B cell (primary cell): ENCODE measurements at regions of chr7 and their contacts with region 1.

Region 1: GRCh38 chr7:128178611-128179010 is 62.5 kb upstream of the LEP start:
- DNase-seq: peak; percentile 70
- ATAC-seq: peak; percentile 100
- H3K4me3 ChIP-seq: no peak overlapping the region
- H3K4me3 Mint-ChIP-seq: peak overlapping the region; percentile 44
- H3K27ac ChIP-seq: no peak overlapping the region
- H3K27ac Mint-ChIP-seq: peak overlapping the region; percentile 72
- H3K4me1 ChIP-seq: peaks cover 29 to 35% of the 10 kb centered on the region in 2 donors
- H3K4me1 Mint-ChIP-seq: peaks cover 45% of the 10 kb centered on the region
- H3K27me3 ChIP-seq: peaks cover 0 to 18% (median 4%) of the 10 kb centered on the region in 4 experiments
- H3K27me3 Mint-ChIP-seq: peaks cover 47% of the 10 kb centered on the region
- CTCF ChIP-seq: no peak

Region 2: DNA sequence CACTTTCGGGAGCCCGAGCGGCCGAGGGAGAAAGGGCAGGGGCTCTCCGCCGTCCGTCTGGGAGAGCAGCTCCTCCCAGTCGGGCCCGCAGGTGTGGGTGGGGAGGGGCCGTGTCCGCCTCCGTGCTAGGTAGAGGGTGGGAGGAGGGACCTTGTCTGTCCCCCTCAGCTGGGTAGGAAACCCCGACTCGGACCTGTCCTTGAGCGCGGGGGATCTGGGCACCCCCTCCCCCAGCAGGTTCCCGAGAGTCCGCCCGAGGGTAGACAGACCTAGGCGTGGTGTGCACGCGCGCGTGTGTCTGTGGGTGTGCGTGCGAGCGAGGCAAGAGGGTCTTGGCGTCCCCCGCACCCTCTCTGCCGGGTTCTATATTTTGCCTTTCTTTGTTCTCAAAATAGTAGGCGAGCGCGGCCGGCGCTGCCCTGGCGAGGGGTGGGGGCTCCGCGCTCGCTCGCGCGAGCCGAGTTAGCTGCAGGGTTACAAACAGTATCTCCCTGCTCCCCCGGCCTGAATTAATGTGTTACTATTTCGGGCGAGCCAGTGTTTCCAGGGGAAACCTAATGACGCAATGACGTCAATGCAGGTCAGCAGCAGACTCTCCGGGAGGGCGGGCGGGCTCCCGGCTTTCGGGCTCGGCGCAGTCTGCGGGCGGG is 11.4 kb before region 1 on chr7:
- CTCF ChIA-PET with region 1: no interaction called
- POLR2A ChIA-PET with region 1: no interaction called
- intact Hi-C with region 1: loop called (anchors 1 kb)
- DNase-seq: peak; percentile 52
- ATAC-seq: peak; percentile 25
- H3K4me3 ChIP-seq: peak overlapping the region; percentile 2 to 67 (median 51)
- H3K4me3 Mint-ChIP-seq: peak overlapping the region; percentile 88
- H3K27ac ChIP-seq: no peak overlapping the region
- H3K27ac Mint-ChIP-seq: no peak overlapping the region
- H3K4me1 ChIP-seq: peaks cover 30 to 36% of the 10 kb centered on the region in 2 donors
- H3K4me1 Mint-ChIP-seq: peaks cover 33% of the 10 kb centered on the region
- H3K27me3 ChIP-seq: peaks cover 0 to 74% (median 52%) of the 10 kb centered on the region in 4 experiments
- H3K27me3 Mint-ChIP-seq: peaks cover 63% of the 10 kb centered on the region
- CTCF ChIP-seq: no peak

Region 3: DNA sequence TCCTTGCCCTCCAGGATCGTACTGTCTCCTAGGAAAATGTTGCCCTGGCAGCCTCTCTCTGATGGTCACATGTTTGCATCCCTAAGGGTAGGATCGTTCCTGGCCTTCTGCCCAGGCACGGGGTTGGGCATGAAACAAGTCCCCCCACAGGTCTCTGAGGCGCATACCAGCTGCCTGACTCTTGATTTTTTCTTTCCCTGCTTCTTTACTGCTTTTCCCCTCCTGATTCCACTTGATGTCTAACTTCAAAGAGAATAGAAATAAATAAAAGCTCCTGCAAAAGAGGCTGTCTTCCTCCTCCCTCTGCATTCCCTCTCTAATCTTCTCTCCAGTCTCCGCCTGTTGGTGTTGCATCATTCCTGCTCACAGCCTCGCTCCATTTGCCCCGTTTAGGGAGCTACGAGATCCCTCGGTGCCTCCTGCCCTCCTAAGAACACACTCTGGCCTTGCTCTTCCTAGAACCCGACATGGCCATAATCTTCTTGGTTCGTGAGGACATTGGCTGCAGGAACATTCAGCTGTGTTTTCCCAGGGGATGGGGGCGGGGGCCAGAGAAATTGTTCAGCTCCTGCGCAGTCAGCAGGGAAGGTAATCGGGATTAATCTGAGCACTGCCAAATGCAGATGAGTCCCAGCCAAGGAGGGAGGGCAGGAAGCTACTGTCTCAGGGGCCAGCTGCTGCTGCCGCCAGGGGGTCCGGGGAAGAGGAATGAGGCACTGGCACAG is 88.4 kb after region 1 on chr7:
- CTCF ChIA-PET with region 1: no interaction called
- POLR2A ChIA-PET with region 1: no interaction called
- intact Hi-C with region 1: no loop called
- DNase-seq: no peak
- ATAC-seq: no peak
- H3K4me3 ChIP-seq: no peak overlapping the region
- H3K4me3 Mint-ChIP-seq: no peak overlapping the region
- H3K27ac ChIP-seq: no peak overlapping the region
- H3K27ac Mint-ChIP-seq: no peak overlapping the region
- H3K4me1 ChIP-seq: no peaks in the 10 kb centered on the region
- H3K4me1 Mint-ChIP-seq: no peaks in the 10 kb centered on the region
- H3K27me3 ChIP-seq: peaks cover 0 to 21% (median 0%) of the 10 kb centered on the region in 4 experiments
- H3K27me3 Mint-ChIP-seq: peaks cover 31% of the 10 kb centered on the region
- CTCF ChIP-seq: no peak

Region 4: GRCh38 chr7:128437426-128438332 is 259.1 kb after region 1 on chr7:
- CTCF ChIA-PET with region 1: no interaction called
- POLR2A ChIA-PET with region 1: no interaction called
- intact Hi-C with region 1: no loop called
- DNase-seq: peak; percentile 68
- ATAC-seq: peak; percentile 93
- H3K4me3 ChIP-seq: peak overlapping the region in 4 of 5 experiments; percentile 11 to 55 (median 38)
- H3K4me3 Mint-ChIP-seq: peak overlapping the region; percentile 65
- H3K27ac ChIP-seq: peak overlapping the region; percentile 60 to 65
- H3K27ac Mint-ChIP-seq: peak overlapping the region; percentile 87
- H3K4me1 ChIP-seq: peaks cover 19 to 24% of the 10 kb centered on the region in 2 donors
- H3K4me1 Mint-ChIP-seq: peaks cover 23% of the 10 kb centered on the region
- H3K27me3 ChIP-seq: no peaks in the 10 kb centered on the region
- H3K27me3 Mint-ChIP-seq: no peaks in the 10 kb centered on the region
- CTCF ChIP-seq: no peak